Posterior vena cava (tissue), 2 donors: ENCODE measurements at regions of chr2 and their contacts with region 1.

Region 1: DNA sequence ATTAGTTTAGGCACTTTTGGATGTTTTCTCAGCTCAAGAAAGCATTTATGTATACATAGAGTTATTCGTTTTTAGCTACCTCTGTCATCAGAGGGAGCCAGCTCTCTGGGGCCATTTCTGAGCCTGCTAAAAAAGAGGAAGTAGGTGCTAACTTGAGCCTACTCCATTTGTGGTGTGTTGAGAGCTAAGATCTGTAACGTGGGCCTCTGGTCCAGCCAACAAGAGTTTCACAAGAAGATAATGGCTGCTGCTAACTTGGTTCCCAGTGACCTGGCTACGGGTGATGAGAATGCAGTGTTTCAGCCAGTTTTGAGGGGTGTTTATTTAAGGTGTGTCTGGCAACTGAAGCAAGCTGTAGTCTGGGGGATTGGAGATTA is 182.5 kb downstream of the PRKCE start:
- DNase-seq: no peak

Region 2: DNA sequence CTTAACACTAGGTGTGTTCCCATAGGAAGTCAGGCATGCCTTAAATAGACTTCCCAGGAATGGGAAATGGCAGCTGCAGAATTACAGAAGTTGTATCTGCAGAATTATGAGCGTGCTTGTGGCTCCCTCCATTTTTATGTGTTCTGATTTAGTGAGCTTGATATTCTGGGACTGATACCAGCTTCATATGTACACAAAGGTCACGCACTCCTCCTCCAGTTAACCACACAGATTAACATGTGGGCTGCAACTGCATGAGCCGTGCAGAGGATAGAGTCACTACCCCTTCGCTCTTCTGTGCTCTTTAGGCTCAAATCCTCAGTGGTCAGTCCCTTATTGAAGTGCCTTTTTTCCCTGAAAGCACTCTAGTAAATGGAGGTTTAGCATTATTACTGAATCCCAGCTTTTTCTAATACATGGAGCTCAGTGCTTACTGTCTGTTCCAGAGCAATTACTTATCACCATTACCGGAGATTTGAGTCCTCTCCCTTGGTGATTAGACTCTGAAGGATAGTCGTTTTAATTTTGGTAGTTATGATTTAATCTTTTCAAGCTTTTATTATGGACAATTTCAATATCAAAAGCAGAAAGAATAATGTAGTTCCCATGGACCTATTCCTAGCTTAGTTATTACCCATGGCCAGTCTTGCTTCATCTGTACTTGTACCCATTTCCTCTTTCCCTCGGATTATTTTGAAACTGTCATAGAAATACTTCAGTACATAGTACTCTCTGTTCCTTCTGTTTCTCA is 55.8 kb after region 1 on chr2:
- intact Hi-C with region 1: loop called in 1 of 2 experiments (anchors 10 kb)
- DNase-seq: no peak